ENCODE measurements at regions of chr3 and their contacts with region 1.

Region 1: DNA sequence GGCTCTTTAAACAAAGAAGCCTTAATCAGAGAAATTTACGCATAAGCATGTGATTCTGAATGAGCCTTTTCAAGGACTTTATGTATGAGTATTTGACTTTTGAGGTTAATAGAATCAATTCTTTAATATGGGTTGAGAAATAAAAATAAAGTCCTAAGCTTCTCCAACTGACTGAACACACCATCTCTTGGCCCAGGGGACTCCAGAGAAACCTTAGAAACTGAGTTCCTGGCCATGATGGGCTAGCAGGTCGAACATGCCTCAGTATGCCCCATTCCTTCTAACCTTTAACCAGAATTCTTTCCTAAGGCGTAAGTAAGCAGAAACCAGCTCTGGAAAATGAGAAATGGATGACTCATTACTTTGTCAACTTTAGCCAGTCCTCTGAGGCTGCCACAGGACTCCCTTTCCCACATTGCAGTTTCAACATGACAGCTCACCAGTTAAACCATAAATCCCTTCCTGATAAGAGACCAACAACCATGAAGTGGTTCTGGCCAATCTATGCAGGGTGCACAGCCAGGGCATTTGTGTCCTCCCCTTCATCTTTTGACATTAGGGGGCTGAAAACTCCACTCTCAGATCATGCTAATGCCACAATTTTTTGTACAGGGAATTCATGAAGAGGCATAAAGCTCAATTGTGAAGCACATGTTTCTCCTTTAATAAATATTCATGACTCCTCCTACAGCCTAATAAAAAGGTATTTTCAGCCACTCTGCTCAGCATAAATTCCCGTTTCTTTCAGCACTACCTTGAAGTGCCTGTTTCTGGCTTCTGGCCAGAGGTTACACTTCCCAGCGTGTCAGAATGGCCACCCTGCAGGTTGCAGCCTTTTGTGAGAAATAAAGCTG is 33.3 kb downstream of the TM4SF18 start:
- DNase-seq: no peak
- H3K4me3 ChIP-seq: no peak overlapping the region
- H3K27ac ChIP-seq: no peak overlapping the region
- H3K4me1 ChIP-seq: peaks cover 1% of the 10 kb centered on the region
- H3K27me3 ChIP-seq: no peaks in the 10 kb centered on the region
- CTCF ChIP-seq: no peak
- EP300 ChIP-seq: no peak
- POLR2A ChIP-seq: no peak

Region 2: GRCh38 chr3:149473357-149474249 is 173.4 kb after region 1 on chr3:
- intact Hi-C with region 1: loop called in 1 of 4 experiments (anchors 10 kb)
- DNase-seq: peak in 3 of 5 donors; percentile 55 to 58 (median 57)
- H3K4me3 ChIP-seq: no peak overlapping the region
- H3K27ac ChIP-seq: peak overlapping the region in 1 of 2 donors; percentile 11
- H3K4me1 ChIP-seq: peaks cover 3% of the 10 kb centered on the region
- H3K27me3 ChIP-seq: no peaks in the 10 kb centered on the region
- CTCF ChIP-seq: no peak
- EP300 ChIP-seq: no peak
- POLR2A ChIP-seq: no peak

Region 3: GRCh38 chr3:150183678-150184425 is 883.7 kb after region 1 on chr3:
- intact Hi-C with region 1: loop called in 1 of 4 experiments (anchors 10 kb)
- DNase-seq: peak; percentile 49 to 69 (median 65)
- H3K4me3 ChIP-seq: peak overlapping the region; percentile 25
- H3K27ac ChIP-seq: no peak overlapping the region
- H3K4me1 ChIP-seq: no peaks in the 10 kb centered on the region
- H3K27me3 ChIP-seq: no peaks in the 10 kb centered on the region
- CTCF ChIP-seq: peak; percentile 23 to 45 (median 41)
- EP300 ChIP-seq: no peak
- POLR2A ChIP-seq: no peak